ENCODE measurements at regions of chr13 and their contacts with region 1.

Region 1: DNA sequence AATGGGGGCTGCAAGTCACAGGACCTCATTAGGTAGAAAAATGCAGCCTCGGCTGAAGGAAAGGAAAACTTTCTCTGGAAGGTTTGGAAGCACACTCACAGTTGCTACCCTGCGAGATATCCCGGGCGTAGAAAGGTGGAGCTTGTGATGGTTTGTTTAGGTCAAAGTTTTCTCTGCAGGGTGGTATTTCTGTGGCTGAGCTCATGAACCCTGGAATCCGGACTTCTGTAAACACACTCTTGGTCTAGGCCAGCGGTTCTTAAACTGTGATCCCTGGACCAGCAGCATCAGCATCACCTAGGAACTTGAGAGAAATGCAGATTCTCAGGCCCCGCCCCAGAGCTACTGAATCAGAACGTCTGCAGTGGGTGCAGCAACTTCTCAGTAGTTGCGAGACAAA is 3.3 kb upstream of the SLC15A1 start:
- DNase-seq: no peak
- H3K4me3 ChIP-seq: no peak overlapping the region
- H3K27ac ChIP-seq: no peak overlapping the region
- H3K4me1 ChIP-seq: peaks cover 0 to 15% (median 12%) of the 10 kb centered on the region in 4 donors
- H3K27me3 ChIP-seq: peaks cover 54% of the 10 kb centered on the region
- CTCF ChIP-seq: no peak
- EP300 ChIP-seq: no peak
- POLR2A ChIP-seq: no peak

Region 2: DNA sequence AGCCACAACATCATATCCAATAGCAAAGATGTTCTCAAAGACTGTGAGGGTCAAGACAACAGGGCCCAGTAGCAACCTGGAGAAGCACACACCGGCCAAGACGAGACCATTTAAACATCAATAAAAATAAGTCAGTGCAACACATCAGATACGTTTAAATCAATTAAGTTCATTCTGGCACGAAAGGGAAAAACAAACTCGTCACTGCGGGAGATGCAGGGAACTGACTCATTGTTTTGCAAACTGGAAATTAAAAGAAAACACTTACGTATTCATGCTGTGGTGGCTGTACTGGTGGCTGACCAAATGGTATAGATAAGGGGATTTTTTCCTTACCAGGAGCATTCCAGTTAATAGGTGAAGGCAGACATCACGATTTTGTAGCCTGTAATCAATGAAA is 23.0 kb after region 1 on chr13:
- in situ Hi-C with region 1: no loop called
- intact Hi-C with region 1: loop called (anchors 1 kb)
- DNase-seq: no peak
- H3K4me3 ChIP-seq: no peak overlapping the region
- H3K27ac ChIP-seq: no peak overlapping the region
- H3K4me1 ChIP-seq: no peaks in the 10 kb centered on the region
- H3K27me3 ChIP-seq: no peaks in the 10 kb centered on the region
- CTCF ChIP-seq: no peak
- EP300 ChIP-seq: no peak
- POLR2A ChIP-seq: no peak